ENCODE measurements at regions of chrX and their contacts with region 1.

Region 1: DNA sequence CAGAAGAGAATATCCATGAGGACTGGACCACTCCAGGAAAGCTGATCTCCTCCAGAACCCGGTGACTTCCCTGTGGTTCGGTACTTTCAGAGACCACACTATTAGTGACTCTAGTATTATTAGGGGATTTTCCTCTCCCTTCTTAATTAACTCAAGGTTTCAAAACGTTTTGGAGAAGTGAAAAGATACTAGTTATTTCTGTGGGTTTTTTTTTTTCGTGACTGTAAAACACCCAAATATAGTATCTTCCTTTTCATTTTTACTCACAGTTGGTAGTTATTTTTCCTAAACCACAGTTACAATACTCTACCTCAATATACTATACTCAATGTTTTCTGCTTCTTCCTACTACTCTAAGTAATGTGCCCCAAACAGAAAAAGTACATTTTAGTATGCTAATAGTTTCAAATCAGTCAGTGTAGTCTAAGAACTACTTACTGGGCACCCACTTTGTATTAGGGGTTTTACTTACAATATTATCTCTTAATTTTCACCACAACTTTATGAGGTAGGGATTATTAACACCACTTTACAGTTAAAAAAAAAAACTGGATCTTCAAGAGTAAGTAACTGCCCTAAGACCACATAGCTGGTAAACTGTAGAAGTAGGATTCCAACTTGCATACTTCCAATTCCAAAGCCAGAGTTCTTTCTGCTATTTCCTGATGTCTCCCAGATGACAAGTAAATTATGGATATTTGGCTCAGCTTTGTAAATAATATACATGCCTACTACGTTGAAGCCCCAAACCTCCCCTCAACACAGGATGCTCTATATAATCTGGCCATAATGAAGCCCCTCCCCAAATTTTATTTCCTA is 45.0 kb downstream of the SLC9A7 start:
- DNase-seq: no peak
- ATAC-seq: peak; percentile 60
- H3K4me3 Mint-ChIP-seq: peak overlapping the region; percentile 58
- H3K27ac Mint-ChIP-seq: peak overlapping the region; percentile 86
- H3K4me1 Mint-ChIP-seq: peaks cover 89% of the 10 kb centered on the region
- H3K27me3 Mint-ChIP-seq: no peaks in the 10 kb centered on the region
- CTCF ChIP-seq: no peak

Region 2: GRCh38 chrX:46693149-46693548 is 20.7 kb before region 1 on chrX:
- CTCF ChIA-PET with region 1: interaction called, 4 read pairs
- POLR2A ChIA-PET with region 1: no interaction called
- intact Hi-C with region 1: loop called (anchors 2 kb)
- DNase-seq: no peak
- ATAC-seq: peak; percentile 49
- H3K4me3 Mint-ChIP-seq: peak overlapping the region; percentile 55
- H3K27ac Mint-ChIP-seq: no peak overlapping the region
- H3K4me1 Mint-ChIP-seq: peaks cover 47% of the 10 kb centered on the region
- H3K27me3 Mint-ChIP-seq: no peaks in the 10 kb centered on the region
- CTCF ChIP-seq: no peak

Region 3: GRCh38 chrX:46836701-46837557 is 123.0 kb after region 1 on chrX and contains the start of gene RP2:
- CTCF ChIA-PET with region 1: no interaction called
- POLR2A ChIA-PET with region 1: no interaction called
- intact Hi-C with region 1: loop called (anchors 2 kb)
- DNase-seq: peak; percentile 77
- ATAC-seq: peak; percentile 93
- H3K4me3 Mint-ChIP-seq: peak within 1 kb of the TSS; percentile 95
- H3K27ac Mint-ChIP-seq: peak within 1 kb of the TSS; percentile 94
- H3K4me1 Mint-ChIP-seq: peaks cover 37% of the 10 kb centered on the region
- H3K27me3 Mint-ChIP-seq: no peaks in the 10 kb centered on the region
- CTCF ChIP-seq: no peak
- total RNA-seq, gene RP2: 11.3 TPM in 2 replicates

Region 4: DNA sequence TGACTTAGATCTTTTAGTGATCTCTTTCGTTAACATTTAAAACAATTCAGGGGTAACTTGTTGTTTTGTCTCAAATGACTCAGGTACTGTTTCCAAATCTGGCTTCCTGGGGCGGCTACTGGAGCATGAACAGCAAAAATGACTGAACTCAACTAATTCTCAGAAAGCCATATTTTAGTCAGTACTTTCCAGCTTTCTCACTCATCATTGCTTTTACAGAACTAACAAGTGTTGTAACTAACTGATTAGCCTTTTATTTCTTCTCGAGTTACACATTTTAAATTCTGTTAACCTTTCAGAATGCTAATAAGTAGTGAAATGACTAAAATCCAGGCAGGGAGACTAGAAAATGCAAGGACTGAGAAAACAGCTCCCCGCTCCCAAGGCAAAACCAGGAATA is 253.7 kb after region 1 on chrX:
- CTCF ChIA-PET with region 1: no interaction called
- POLR2A ChIA-PET with region 1: no interaction called
- intact Hi-C with region 1: loop called (anchors 10 kb)
- DNase-seq: no peak
- ATAC-seq: peak; percentile 54
- H3K4me3 Mint-ChIP-seq: peak overlapping the region; percentile 70
- H3K27ac Mint-ChIP-seq: peak overlapping the region; percentile 93
- H3K4me1 Mint-ChIP-seq: peaks cover 82% of the 10 kb centered on the region
- H3K27me3 Mint-ChIP-seq: no peaks in the 10 kb centered on the region
- CTCF ChIP-seq: no peak

Measured in activated B cell treated with CpG ODN at 0.5 μM for 24 hours (primary cell).